ENCODE measurements at regions of chr5 and their contacts with region 1.

Region 1: DNA sequence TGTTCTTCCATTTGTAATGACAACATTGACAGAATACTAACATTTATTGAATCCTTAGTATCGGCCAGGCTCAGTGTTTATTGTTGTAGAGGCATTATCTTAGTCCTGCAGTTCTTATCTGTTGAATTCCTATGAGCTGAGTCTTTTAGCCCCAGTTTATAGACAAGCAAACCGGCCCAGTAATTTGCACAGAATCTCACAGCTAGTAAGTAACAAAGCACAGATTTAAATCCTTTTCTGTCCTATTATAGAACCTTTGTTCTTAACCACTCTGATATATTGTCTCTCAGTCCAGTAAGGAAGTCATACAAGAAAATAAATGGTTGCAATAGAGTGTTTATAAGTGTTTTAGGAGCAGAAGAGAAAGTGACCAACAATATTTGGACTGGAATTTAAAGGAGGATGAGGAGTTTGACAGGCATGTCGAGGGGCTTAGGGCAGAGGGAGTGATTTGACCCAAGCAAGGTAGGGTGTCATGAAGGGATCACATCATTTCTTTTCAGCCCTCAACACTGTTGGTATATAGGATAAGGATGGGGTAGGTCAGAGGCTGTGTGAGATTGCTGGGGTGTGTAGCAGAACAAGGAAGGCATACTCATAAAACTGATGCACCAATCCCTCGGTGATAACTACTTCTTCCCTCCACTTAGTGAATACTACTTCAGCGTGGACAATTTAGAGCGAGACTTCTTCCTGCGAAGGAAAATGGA is 39.5 kb downstream of the LARP1 start:
- DNase-seq: peak in 1 of 2 experiments; percentile 52
- H3K4me3 ChIP-seq: no peak overlapping the region
- H3K4me3 Mint-ChIP-seq: peak overlapping the region; percentile 33
- H3K27ac Mint-ChIP-seq: peak overlapping the region; percentile 78
- H3K4me1 ChIP-seq: peaks cover 35% of the 10 kb centered on the region
- H3K4me1 Mint-ChIP-seq: peaks cover 33% of the 10 kb centered on the region
- H3K27me3 ChIP-seq: no peaks in the 10 kb centered on the region
- H3K27me3 Mint-ChIP-seq: no peaks in the 10 kb centered on the region
- CTCF ChIP-seq: no peak

Region 2: DNA sequence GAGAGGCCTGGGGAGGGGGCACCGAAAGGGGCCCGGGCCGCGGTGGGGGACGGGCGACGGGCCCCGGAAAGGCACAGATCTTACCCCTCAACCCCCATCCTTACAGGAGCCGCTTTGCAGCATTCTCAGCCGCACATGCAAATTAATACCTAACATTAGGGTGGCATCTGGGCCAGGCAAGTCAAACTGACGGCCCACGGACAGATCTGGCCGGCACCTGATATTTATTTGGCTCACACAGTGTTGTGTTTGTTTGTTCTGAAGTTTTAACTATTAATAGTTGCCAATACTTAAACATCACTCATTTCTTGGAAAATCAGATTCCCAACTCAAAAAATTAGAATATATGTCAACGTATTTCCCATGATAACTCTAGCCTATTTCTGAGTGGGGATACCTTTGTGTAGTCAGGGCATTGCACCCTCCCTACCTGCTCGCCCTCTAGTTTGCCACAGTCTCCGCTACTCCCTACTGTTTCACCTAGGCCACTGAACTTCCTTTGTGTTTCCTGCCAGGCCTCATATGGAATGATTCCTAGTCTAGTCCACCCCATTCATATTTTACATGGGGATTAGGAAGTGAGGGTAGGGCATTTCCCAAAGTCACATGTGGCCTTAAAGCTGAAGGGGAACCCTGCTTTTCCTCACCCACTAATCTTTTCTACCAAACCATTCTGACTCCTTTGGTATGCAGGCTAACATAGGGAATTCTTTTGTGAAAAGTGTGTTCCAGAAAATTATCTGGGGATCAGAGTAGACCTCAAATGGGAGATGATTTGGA is 111.4 kb before region 1 on chr5:
- CTCF ChIA-PET with region 1: no interaction called
- POLR2A ChIA-PET with region 1: interaction called, 12 read pairs
- intact Hi-C with region 1: no loop called
- DNase-seq: no peak
- H3K4me3 ChIP-seq: peak overlapping the region; percentile 58
- H3K4me3 Mint-ChIP-seq: peak overlapping the region; percentile 89
- H3K27ac Mint-ChIP-seq: peak overlapping the region; percentile 95
- H3K4me1 ChIP-seq: peaks cover 12% of the 10 kb centered on the region; the same call in 1 of the 2 replicates
- H3K4me1 Mint-ChIP-seq: peaks cover 11% of the 10 kb centered on the region
- H3K27me3 ChIP-seq: no peaks in the 10 kb centered on the region
- H3K27me3 Mint-ChIP-seq: no peaks in the 10 kb centered on the region
- CTCF ChIP-seq: no peak

Region 3: GRCh38 chr5:154811653-154812365 is 17.1 kb after region 1 on chr5:
- CTCF ChIA-PET with region 1: no interaction called
- POLR2A ChIA-PET with region 1: no interaction called
- intact Hi-C with region 1: loop called (anchors 2 kb)
- DNase-seq: peak; percentile 62 to 66
- H3K4me3 ChIP-seq: no peak overlapping the region
- H3K4me3 Mint-ChIP-seq: no peak overlapping the region
- H3K27ac Mint-ChIP-seq: peak overlapping the region; percentile 36
- H3K4me1 ChIP-seq: peaks cover 9% of the 10 kb centered on the region; the same call in 1 of the 2 replicates
- H3K4me1 Mint-ChIP-seq: peaks cover 10% of the 10 kb centered on the region
- H3K27me3 ChIP-seq: no peaks in the 10 kb centered on the region
- H3K27me3 Mint-ChIP-seq: no peaks in the 10 kb centered on the region
- CTCF ChIP-seq: peak; percentile 89 to 91

Region 4: GRCh38 chr5:154842689-154843530 is 48.2 kb after region 1 on chr5:
- CTCF ChIA-PET with region 1: no interaction called
- POLR2A ChIA-PET with region 1: no interaction called
- intact Hi-C with region 1: loop called (anchors 2 kb)
- DNase-seq: peak; percentile 56 to 63
- H3K4me3 ChIP-seq: no peak overlapping the region
- H3K4me3 Mint-ChIP-seq: peak overlapping the region; percentile 29
- H3K27ac Mint-ChIP-seq: no peak overlapping the region
- H3K4me1 ChIP-seq: peaks cover 47% of the 10 kb centered on the region
- H3K4me1 Mint-ChIP-seq: peaks cover 32% of the 10 kb centered on the region
- H3K27me3 ChIP-seq: no peaks in the 10 kb centered on the region
- H3K27me3 Mint-ChIP-seq: no peaks in the 10 kb centered on the region
- CTCF ChIP-seq: no peak

Region 5: GRCh38 chr5:154878642-154879335 is 84.1 kb after region 1 on chr5:
- CTCF ChIA-PET with region 1: no interaction called
- POLR2A ChIA-PET with region 1: no interaction called
- intact Hi-C with region 1: no loop called
- DNase-seq: no peak
- H3K4me3 ChIP-seq: no peak overlapping the region
- H3K4me3 Mint-ChIP-seq: no peak overlapping the region
- H3K27ac Mint-ChIP-seq: no peak overlapping the region
- H3K4me1 ChIP-seq: no peaks in the 10 kb centered on the region
- H3K4me1 Mint-ChIP-seq: no peaks in the 10 kb centered on the region
- H3K27me3 ChIP-seq: no peaks in the 10 kb centered on the region
- H3K27me3 Mint-ChIP-seq: no peaks in the 10 kb centered on the region
- CTCF ChIP-seq: no peak

Region 6: DNA sequence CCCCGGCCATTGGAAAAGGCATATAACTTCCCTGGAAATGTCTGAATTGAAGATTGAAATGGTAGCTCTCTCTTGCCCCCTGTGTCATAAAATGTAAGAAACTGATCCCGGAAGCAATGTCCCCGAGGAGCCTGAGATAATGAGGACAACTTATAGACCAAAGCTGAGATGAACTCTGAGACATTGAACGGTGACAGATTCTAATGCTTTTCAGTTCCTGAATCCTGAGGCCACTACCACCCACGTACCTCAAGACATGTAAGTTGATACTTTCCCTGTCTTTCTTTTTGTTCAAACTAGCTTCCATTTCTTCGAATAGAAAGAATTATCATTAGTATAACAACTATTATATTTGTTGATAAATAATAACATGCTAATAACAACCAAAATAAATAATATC is 269.9 kb after region 1 on chr5:
- CTCF ChIA-PET with region 1: no interaction called
- POLR2A ChIA-PET with region 1: no interaction called
- intact Hi-C with region 1: no loop called
- DNase-seq: no peak
- H3K4me3 ChIP-seq: no peak overlapping the region
- H3K4me3 Mint-ChIP-seq: no peak overlapping the region
- H3K27ac Mint-ChIP-seq: no peak overlapping the region
- H3K4me1 ChIP-seq: no peaks in the 10 kb centered on the region
- H3K4me1 Mint-ChIP-seq: no peaks in the 10 kb centered on the region
- H3K27me3 ChIP-seq: no peaks in the 10 kb centered on the region
- H3K27me3 Mint-ChIP-seq: no peaks in the 10 kb centered on the region
- CTCF ChIP-seq: no peak